ENCODE measurements at regions of chr1 and their contacts with region 1.

Region 1: GRCh38 chr1:151837208-151837596 is 2.4 kb downstream of the C2CD4D start:
- DNase-seq: no peak
- H3K4me3 ChIP-seq: no peak overlapping the region
- H3K27ac ChIP-seq: no peak overlapping the region
- H3K4me1 ChIP-seq: peaks cover 0 to 19% of the 10 kb centered on the region in 2 experiments; a peak in 1 of 4 replicates
- H3K27me3 ChIP-seq: no peaks in the 10 kb centered on the region
- CTCF ChIP-seq: no peak
- EP300 ChIP-seq: no peak
- RAD21 ChIP-seq: no peak

Region 2: DNA sequence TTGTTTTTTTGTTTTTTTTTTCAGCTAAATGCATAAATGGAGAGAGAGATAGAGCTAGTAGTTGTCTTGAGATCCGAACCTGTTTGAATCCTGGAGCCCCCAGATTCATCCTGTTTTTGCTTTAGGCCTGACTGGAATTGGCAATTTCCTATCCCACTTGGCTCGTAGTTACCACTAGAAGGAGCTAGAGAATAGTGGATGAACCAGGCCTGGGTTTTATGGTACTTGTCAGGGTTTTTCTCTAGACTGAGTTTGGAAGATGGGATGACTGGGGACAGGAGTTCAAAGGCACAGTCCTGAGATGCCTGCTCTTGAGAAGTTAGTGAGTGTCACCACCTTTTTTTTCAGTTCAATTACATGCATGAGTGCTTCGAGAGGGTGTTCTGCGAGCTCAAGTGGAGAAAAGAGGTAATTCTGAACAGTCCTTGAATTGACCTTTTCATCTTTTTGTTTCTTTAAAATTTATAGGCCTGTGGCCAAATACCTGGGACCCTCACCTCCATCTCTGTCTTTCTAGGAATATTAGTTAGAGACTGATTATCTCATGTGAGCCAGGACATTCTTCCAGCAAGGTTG is 144.0 kb before region 1 on chr1:
- CTCF ChIA-PET with region 1: interaction called, 17 read pairs
- POLR2A ChIA-PET with region 1: no interaction called
- DNase-seq: peak; percentile 72
- H3K4me3 ChIP-seq: no peak overlapping the region; a peak in 1 of 4 replicates
- H3K27ac ChIP-seq: no peak overlapping the region
- H3K4me1 ChIP-seq: no peaks in the 10 kb centered on the region
- H3K27me3 ChIP-seq: no peaks in the 10 kb centered on the region
- CTCF ChIP-seq: peak; percentile 73
- EP300 ChIP-seq: no peak
- RAD21 ChIP-seq: peak; percentile 89

Region 3: DNA sequence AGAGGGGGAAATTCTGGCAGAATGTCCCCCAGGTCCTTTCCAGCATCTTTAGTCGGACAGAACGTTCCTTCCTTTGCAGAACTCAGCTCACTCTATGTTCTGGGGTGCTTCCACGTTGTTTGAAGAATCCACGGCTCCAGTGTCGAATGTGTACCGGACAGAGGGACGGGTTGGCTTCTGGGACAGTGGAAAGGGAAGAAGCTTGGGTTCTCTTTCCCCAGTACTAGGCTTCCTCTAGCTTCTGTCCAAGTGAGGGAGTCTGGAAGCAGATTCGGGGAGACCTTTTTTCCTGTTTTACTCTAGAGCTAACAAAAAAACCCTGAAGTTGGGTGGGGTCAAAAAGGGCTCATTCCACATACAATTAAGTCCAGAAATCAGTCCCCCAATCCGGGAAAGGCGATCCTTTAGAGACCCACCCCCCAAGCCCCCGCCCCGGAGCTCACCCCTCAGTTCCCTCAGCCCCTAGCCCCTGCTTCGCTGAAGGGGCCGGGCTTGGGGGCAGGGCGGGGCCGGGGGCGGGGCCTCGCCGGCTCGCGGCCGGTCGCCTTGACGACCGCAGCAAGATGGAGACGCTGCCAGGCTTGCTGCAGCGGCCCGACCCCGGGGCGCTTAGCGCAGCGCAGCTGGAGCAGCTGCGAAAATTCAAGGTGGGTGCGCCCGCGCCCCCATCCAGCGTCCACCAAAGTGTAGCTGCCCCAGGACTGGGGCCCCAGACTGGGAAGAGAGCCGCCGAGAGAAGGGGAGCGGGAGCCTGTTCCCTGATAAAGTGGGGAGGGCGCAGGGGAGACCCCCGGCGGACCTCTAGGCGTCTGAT is 116.0 kb before region 1 on chr1 and contains the start of gene RIIAD1:
- CTCF ChIA-PET with region 1: interaction called, 37 read pairs
- POLR2A ChIA-PET with region 1: no interaction called
- DNase-seq: peak; percentile 93
- H3K4me3 ChIP-seq: peak within 1 kb of the TSS; percentile 59 to 73
- H3K27ac ChIP-seq: peak within 1 kb of the TSS in 1 of 2 experiments; percentile 44; a peak in 2 of 4 replicates
- H3K4me1 ChIP-seq: peaks cover 0 to 36% of the 10 kb centered on the region in 2 experiments; a peak in 3 of 4 replicates
- H3K27me3 ChIP-seq: peaks cover 21% of the 10 kb centered on the region
- CTCF ChIP-seq: peak; percentile 45
- EP300 ChIP-seq: no peak
- RAD21 ChIP-seq: peak; percentile 38
- polyA plus RNA-seq, gene RIIAD1: not detected in 2 replicates

Region 4: DNA sequence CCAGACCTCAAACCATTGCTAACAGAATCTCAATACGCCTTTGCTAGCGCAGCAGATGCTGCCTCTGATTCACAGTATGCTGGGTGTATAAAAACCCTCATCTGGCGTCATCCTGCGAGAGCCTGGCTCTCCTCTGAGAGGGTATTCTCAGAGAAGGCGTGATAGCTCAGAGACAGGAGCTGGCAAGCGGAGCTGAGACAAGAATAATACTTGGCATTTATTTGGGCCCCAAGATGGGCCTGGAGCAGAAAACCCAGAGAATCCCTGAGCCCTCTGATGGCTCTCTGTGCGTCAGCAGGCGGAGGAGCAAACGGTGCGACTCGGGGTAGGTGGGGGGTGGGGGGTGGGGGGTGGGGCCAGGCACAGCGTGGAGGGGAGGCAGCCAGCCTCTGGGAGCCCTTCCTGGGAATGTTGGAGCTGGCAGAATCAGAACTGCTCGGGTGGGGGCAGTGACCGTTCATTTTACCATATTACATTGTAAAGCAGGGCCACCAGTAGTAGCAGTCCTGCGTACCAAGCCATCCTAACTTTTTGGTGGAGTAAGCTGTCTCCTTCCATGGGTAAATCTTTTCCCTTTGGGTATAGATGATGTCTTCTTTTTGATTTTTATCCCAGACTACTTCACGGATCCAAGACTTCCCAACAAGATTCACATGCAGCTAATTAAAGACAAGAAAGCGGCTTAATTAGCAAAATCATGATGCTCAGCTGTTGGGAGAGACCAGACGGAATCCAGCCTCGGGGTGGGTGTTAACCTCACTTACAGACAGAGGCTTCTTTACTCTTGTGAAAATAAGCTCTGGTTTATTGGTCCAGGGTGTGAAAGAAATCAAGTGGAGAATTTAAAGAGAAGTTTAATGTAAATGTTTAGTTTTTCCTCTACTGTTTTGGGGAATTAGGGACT is 108.8 kb before region 1 on chr1:
- CTCF ChIA-PET with region 1: interaction called, 25 read pairs
- POLR2A ChIA-PET with region 1: no interaction called
- DNase-seq: peak; percentile 77
- H3K4me3 ChIP-seq: peak overlapping the region in 1 of 2 experiments; percentile 6; a peak in 1 of 4 replicates
- H3K27ac ChIP-seq: peak overlapping the region in 1 of 2 experiments; percentile 78; a peak in 2 of 4 replicates
- H3K4me1 ChIP-seq: peaks cover 0 to 26% of the 10 kb centered on the region in 2 experiments; a peak in 2 of 4 replicates
- H3K27me3 ChIP-seq: no peaks in the 10 kb centered on the region
- CTCF ChIP-seq: no peak
- EP300 ChIP-seq: 0 out of 4 replicates have a peak, but pooled peaks of 1 of the 2 experiments have one; percentile 46
- RAD21 ChIP-seq: peak; percentile 17; the same call in 1 of the 2 replicates

Region 5: DNA sequence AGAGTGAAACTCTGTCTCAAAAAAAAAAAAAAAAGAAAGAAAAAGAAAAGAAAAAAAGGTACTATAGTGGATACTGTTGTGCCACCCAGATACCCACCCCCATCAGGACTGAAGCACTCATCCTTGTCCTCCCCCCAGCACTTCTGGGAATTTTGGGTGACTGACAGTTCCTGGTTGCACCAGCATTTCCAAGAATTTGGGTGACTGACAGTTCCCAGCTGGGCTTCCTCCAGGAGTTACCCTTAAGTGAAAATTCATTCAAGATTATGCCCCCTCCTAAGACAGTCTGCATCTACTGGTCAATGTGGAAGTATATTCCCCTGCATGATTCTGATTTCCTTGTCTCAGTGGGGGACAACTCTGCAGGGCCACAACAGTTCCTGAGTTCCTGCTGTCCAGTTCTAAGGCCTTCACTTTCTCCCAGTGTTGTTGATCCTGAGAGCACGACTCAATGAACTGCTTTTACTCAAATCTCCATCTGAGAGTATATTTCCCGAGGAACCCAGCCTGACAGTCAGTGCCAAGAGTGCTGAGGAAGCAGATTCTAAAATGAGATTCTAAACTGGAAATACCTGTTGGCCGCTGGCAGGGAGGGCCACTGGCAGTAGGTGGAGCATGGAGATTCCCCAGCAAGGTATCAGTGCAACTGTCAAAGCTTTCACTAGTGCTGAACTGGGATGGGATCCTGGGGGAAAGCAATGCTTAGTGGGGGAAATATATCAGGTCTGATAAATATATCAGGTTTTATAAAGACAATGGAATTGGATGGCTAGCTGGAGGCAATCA is 97.4 kb before region 1 on chr1:
- CTCF ChIA-PET with region 1: interaction called, 17 read pairs
- POLR2A ChIA-PET with region 1: no interaction called
- DNase-seq: no peak
- H3K4me3 ChIP-seq: 0 out of 4 replicates have a peak overlapping the region, but pooled peaks of 1 of the 2 experiments have one; percentile 7
- H3K27ac ChIP-seq: no peak overlapping the region
- H3K4me1 ChIP-seq: peaks cover 0 to 2% of the 10 kb centered on the region in 2 experiments; a peak in 1 of 4 replicates
- H3K27me3 ChIP-seq: peaks cover 25% of the 10 kb centered on the region; the same call in 1 of the 2 replicates
- CTCF ChIP-seq: no peak
- EP300 ChIP-seq: no peak
- RAD21 ChIP-seq: no peak

Region 6: DNA sequence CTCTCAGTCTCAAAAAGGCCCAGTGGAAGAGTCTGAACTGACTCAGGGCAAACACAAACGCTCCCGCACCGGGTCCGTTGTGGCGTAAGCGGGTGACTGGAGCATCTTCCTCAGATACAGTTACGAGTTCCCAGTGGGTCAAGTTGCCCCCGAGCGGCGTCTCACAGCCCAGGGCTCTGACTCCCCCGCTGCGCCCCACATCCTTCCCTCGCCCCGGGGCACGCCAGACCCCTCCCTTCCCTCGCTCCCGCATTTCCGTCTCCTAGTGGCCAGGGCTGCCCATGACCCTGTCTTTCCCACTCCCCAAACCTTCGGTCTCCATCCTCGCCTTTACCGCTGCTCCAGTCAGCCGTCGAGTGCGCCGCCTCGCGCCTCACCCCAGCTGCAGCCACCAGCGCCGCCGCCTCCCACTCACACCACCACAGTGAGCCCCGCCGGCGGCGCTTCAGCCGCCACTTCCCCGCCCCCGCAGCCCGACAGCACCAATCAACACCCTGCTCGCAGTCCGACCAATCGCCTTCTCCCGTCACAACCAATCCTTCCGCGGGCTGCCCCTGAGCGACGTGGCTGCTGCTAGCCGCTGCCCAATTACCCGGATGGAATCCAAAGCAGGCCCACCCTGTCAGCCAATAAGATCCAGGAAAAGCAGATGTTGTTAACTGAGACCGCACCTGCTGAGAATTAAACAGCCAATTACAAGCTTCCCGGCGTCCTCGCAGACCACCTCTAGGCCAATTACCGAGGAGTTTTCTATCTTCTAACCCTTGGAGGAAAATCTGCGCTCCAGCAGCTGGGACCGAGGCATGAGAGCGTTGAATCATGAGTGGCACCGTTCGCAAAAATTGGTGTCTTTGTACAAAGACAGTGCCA is 46.9 kb before region 1 on chr1 and contains the start of gene TDRKH:
- CTCF ChIA-PET with region 1: interaction called, 21 read pairs
- POLR2A ChIA-PET with region 1: no interaction called
- DNase-seq: peak; percentile 98
- H3K4me3 ChIP-seq: peak within 1 kb of the TSS; percentile 85 to 86
- H3K27ac ChIP-seq: peak within 1 kb of the TSS in 1 of 2 experiments; percentile 88; a peak in 2 of 4 replicates
- H3K4me1 ChIP-seq: peaks cover 0 to 5% of the 10 kb centered on the region in 2 experiments; a peak in 2 of 4 replicates
- H3K27me3 ChIP-seq: no peaks in the 10 kb centered on the region
- CTCF ChIP-seq: peak; percentile 39
- EP300 ChIP-seq: no peak
- RAD21 ChIP-seq: peak; percentile 17; the same call in 1 of the 2 replicates
- polyA plus RNA-seq, gene TDRKH: 1.9 and 2.7 TPM in 2 replicates

Region 7: GRCh38 chr1:151820940-151821339 is 16.3 kb before region 1 on chr1:
- CTCF ChIA-PET with region 1: interaction called, 46 read pairs
- POLR2A ChIA-PET with region 1: interaction called, 6 read pairs
- DNase-seq: peak; percentile 89
- H3K4me3 ChIP-seq: no peak overlapping the region
- H3K27ac ChIP-seq: peak overlapping the region in 1 of 2 experiments; percentile 81; a peak in 2 of 4 replicates
- H3K4me1 ChIP-seq: peaks cover 0 to 58% of the 10 kb centered on the region in 2 experiments; a peak in 2 of 4 replicates
- H3K27me3 ChIP-seq: peaks cover 2% of the 10 kb centered on the region; the same call in 1 of the 2 replicates
- CTCF ChIP-seq: no peak
- EP300 ChIP-seq: peak in 1 of 2 experiments; percentile 94; a peak in 2 of 4 replicates
- RAD21 ChIP-seq: peak; percentile 34

Region 8: GRCh38 chr1:151945725-151946364 is 108.6 kb after region 1 on chr1:
- CTCF ChIA-PET with region 1: no interaction called
- POLR2A ChIA-PET with region 1: no interaction called
- DNase-seq: peak; percentile 40
- H3K4me3 ChIP-seq: no peak overlapping the region
- H3K27ac ChIP-seq: peak overlapping the region in 1 of 2 experiments; percentile 63; a peak in 2 of 4 replicates
- H3K4me1 ChIP-seq: peaks cover 1 to 6% of the 10 kb centered on the region in 2 experiments; a peak in 2 of 4 replicates
- H3K27me3 ChIP-seq: no peaks in the 10 kb centered on the region; the same call in 1 of the 2 replicates
- CTCF ChIP-seq: no peak
- EP300 ChIP-seq: peak in 1 of 2 experiments; percentile 43; a peak in 1 of 4 replicates
- RAD21 ChIP-seq: no peak